ENCODE measurements at regions of chr2 and their contacts with region 1.

Region 1: DNA sequence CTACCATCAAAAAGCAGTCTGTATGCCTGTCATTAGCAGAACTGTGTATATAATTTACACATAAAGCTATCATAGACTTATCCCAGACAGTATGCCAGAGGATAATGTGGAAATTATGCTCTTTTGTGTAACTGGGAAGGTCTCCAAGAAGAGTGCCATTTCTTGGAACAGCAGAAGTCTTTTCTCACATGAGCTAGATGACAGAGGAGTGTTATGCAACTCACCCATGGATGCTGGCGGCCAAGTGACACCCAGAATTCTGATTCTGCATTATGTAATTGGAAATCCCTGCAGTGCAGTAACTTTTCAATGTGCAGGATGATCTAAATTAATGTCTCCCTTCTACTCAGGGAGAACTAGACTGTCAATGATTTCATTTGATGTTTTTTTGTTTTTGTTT is 160.0 kb downstream of the UBE2E3 start:
- DNase-seq: no peak
- ATAC-seq: no peak
- H3K4me3 Mint-ChIP-seq: no peak overlapping the region
- H3K27ac Mint-ChIP-seq: peak overlapping the region; percentile 97
- H3K4me1 Mint-ChIP-seq: peaks cover 78% of the 10 kb centered on the region
- H3K27me3 Mint-ChIP-seq: no peaks in the 10 kb centered on the region
- CTCF ChIP-seq: no peak

Region 2: GRCh38 chr2:181008407-181008806 is 132.0 kb before region 1 on chr2:
- CTCF ChIA-PET with region 1: no interaction called
- POLR2A ChIA-PET with region 1: no interaction called
- intact Hi-C with region 1: no loop called
- DNase-seq: no peak
- ATAC-seq: no peak
- H3K4me3 Mint-ChIP-seq: no peak overlapping the region
- H3K27ac Mint-ChIP-seq: no peak overlapping the region
- H3K4me1 Mint-ChIP-seq: peaks cover 14% of the 10 kb centered on the region
- H3K27me3 Mint-ChIP-seq: no peaks in the 10 kb centered on the region
- CTCF ChIP-seq: no peak

Region 3: DNA sequence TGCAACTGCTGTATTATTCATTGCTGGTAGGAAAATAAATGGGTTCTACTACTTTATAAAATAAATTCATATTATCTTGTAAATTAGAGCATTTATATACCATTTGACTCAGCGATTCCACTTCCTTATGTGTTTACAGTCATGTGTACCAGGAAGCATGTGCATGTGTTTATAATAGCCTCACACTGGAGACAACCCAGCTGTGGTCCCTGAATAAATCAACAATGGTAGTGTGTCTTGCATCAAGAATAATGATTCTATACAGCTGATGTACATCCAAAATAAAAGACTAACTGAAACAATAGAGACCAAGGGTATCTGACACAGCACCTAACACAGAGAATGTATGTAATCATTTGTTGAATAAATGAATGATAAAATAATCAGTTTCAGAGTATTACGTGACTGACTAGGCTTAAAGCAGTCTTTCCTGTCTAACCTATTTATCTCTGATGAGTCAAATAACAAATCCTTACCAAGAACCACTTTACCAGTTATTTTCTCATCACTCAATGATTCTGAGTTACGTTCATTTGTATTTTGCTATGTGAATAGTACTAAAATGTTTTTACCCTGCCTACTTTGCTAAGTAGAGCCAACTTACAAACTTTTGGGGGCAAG is 56.8 kb after region 1 on chr2:
- CTCF ChIA-PET with region 1: no interaction called
- POLR2A ChIA-PET with region 1: no interaction called
- intact Hi-C with region 1: loop called (anchors 5 kb)
- DNase-seq: peak; percentile 15
- ATAC-seq: peak; percentile 74
- H3K4me3 Mint-ChIP-seq: peak overlapping the region; percentile 35
- H3K27ac Mint-ChIP-seq: peak overlapping the region; percentile 86
- H3K4me1 Mint-ChIP-seq: peaks cover 45% of the 10 kb centered on the region
- H3K27me3 Mint-ChIP-seq: no peaks in the 10 kb centered on the region
- CTCF ChIP-seq: no peak

Region 4: GRCh38 chr2:181326661-181327060 is 186.2 kb after region 1 on chr2:
- CTCF ChIA-PET with region 1: no interaction called
- POLR2A ChIA-PET with region 1: no interaction called
- intact Hi-C with region 1: no loop called
- DNase-seq: no peak
- ATAC-seq: no peak
- H3K4me3 Mint-ChIP-seq: no peak overlapping the region
- H3K27ac Mint-ChIP-seq: no peak overlapping the region
- H3K4me1 Mint-ChIP-seq: peaks cover 11% of the 10 kb centered on the region
- H3K27me3 Mint-ChIP-seq: no peaks in the 10 kb centered on the region
- CTCF ChIP-seq: no peak